ENCODE measurements at regions of chr11 and their contacts with region 1.

Region 1: DNA sequence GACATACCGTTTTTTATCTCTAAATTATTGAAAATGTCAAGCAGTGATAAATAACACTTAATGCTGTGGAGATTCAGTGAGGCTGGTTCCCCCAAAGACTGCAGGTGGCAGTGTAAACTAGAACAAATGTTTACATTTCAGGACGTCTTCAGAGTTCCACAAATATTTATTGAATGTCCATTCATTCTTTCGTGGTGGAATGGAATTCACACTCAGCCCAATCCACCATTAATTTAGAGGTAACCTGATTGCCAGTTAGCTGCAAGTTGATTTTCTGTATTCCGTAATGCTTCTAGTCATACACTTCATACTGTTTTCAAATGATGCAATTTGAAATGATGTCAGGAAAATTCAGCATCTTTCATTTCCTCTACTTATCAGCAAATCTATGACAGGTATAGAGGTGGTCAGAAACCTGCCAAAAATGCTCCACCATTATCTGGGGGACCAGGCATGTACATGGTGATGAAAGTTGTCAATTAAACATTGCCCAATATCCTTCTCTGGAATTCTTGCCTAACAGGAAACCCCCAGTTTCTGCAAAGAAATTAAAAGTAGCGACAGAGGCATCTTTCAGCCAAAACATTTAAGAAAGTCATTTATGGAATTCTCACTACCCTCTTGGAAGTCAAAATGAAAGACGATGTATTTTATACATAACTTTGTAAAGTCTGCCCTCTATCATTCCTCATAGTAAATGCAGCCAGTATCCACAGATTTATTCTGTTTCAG is 94.3 kb upstream of the BMAL1 start:
- DNase-seq: peak in 4 of 9 donors; percentile 3 to 15 (median 12)
- ATAC-seq: peak; percentile 62
- H3K4me3 ChIP-seq: no peak overlapping the region
- H3K4me3 Mint-ChIP-seq: peak overlapping the region in 8 of 10 donors; percentile 10 to 58 (median 36)
- H3K27ac ChIP-seq: no peak overlapping the region
- H3K27ac Mint-ChIP-seq: no peak overlapping the region
- H3K4me1 ChIP-seq: no peaks in the 10 kb centered on the region
- H3K4me1 Mint-ChIP-seq: peaks cover 0 to 9% (median 6%) of the 10 kb centered on the region in 7 donors
- H3K27me3 ChIP-seq: no peaks in the 10 kb centered on the region
- H3K27me3 Mint-ChIP-seq: peaks cover 5 to 16% (median 9%) of the 10 kb centered on the region in 5 donors

Region 2: GRCh38 chr11:12963792-12964536 is 219.3 kb before region 1 on chr11:
- CTCF ChIA-PET with region 1: no interaction called
- POLR2A ChIA-PET with region 1: no interaction called
- intact Hi-C with region 1: loop called in 1 of 2 experiments (anchors 1 kb)
- DNase-seq: peak; percentile 13 to 59 (median 39)
- ATAC-seq: peak; percentile 76
- H3K4me3 ChIP-seq: no peak overlapping the region
- H3K4me3 Mint-ChIP-seq: peak overlapping the region in 1 of 10 donors; percentile 5
- H3K27ac ChIP-seq: no peak overlapping the region
- H3K27ac Mint-ChIP-seq: no peak overlapping the region
- H3K4me1 ChIP-seq: no peaks in the 10 kb centered on the region
- H3K4me1 Mint-ChIP-seq: no peaks in the 10 kb centered on the region
- H3K27me3 ChIP-seq: no peaks in the 10 kb centered on the region
- H3K27me3 Mint-ChIP-seq: peaks cover 17 to 37% (median 30%) of the 10 kb centered on the region in 5 donors

Region 3: DNA sequence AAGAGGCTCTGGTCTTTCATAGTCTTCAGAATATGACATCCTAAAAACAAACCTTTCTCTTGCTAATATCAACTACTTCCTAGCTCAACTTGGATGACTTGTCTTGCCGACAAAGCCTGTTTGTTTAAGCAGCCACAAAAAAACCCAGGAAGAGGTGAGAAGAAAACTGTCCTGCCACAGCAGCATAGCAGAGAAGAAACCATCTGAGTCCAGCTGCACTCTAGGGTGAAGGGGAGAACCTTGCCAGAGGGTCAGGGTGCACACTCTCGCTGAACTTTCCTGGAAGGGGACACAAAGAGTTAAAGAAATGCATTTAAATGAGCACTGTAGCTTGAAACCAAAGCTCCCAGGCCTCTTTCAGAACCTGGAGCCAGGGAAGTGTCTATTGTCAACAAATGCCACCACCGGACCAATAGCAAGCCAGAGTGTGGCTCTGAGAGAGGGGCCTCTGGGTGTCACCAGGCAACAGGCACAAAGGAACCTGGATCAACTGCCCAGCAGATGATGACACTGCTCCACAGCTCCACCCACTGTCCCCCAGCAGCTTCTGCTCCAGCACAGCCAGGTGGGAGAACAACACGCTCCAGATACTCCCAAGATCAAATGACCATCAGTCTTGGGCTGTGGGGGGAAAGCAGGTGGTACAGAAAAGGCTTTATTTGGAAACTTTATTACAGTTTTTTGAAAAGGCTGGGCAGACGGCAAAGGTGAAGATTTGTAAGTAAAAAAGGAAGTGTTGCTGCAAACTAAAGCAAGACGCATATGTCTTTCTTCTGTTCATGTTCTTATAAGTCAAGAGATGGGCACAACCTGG is 68.5 kb before region 1 on chr11:
- CTCF ChIA-PET with region 1: no interaction called
- POLR2A ChIA-PET with region 1: no interaction called
- intact Hi-C with region 1: no loop called
- DNase-seq: no peak
- ATAC-seq: no peak
- H3K4me3 ChIP-seq: no peak overlapping the region
- H3K4me3 Mint-ChIP-seq: no peak overlapping the region
- H3K27ac ChIP-seq: no peak overlapping the region
- H3K27ac Mint-ChIP-seq: no peak overlapping the region
- H3K4me1 ChIP-seq: no peaks in the 10 kb centered on the region
- H3K4me1 Mint-ChIP-seq: peaks cover 0 to 7% (median 0%) of the 10 kb centered on the region in 7 donors
- H3K27me3 ChIP-seq: no peaks in the 10 kb centered on the region
- H3K27me3 Mint-ChIP-seq: peaks cover 16 to 49% (median 17%) of the 10 kb centered on the region in 5 donors

Region 4: GRCh38 chr11:13140028-13140870 is 43.0 kb before region 1 on chr11:
- CTCF ChIA-PET with region 1: no interaction called
- POLR2A ChIA-PET with region 1: no interaction called
- intact Hi-C with region 1: no loop called
- DNase-seq: no peak
- ATAC-seq: no peak
- H3K4me3 ChIP-seq: no peak overlapping the region
- H3K4me3 Mint-ChIP-seq: no peak overlapping the region
- H3K27ac ChIP-seq: no peak overlapping the region
- H3K27ac Mint-ChIP-seq: no peak overlapping the region
- H3K4me1 ChIP-seq: no peaks in the 10 kb centered on the region
- H3K4me1 Mint-ChIP-seq: peaks cover 0 to 2% (median 0%) of the 10 kb centered on the region in 7 donors
- H3K27me3 ChIP-seq: no peaks in the 10 kb centered on the region
- H3K27me3 Mint-ChIP-seq: peaks cover 9 to 43% (median 33%) of the 10 kb centered on the region in 5 donors

Region 5: GRCh38 chr11:13210424-13210823 is 27.2 kb after region 1 on chr11:
- CTCF ChIA-PET with region 1: interaction called, 8 read pairs
- POLR2A ChIA-PET with region 1: interaction called, 3 read pairs
- intact Hi-C with region 1: loop called in 1 of 2 experiments (anchors 1 kb)
- DNase-seq: peak in 3 of 9 donors; percentile 7 to 9 (median 8)
- ATAC-seq: no peak
- H3K4me3 ChIP-seq: no peak overlapping the region
- H3K4me3 Mint-ChIP-seq: no peak overlapping the region
- H3K27ac ChIP-seq: no peak overlapping the region
- H3K27ac Mint-ChIP-seq: peak overlapping the region in 1 of 9 donors; percentile 32
- H3K4me1 ChIP-seq: peaks cover 0 to 6% of the 10 kb centered on the region in 2 donors
- H3K4me1 Mint-ChIP-seq: peaks cover 16 to 33% (median 23%) of the 10 kb centered on the region in 7 donors
- H3K27me3 ChIP-seq: no peaks in the 10 kb centered on the region
- H3K27me3 Mint-ChIP-seq: peaks cover 0 to 3% (median 0%) of the 10 kb centered on the region in 5 donors

Region 6: DNA sequence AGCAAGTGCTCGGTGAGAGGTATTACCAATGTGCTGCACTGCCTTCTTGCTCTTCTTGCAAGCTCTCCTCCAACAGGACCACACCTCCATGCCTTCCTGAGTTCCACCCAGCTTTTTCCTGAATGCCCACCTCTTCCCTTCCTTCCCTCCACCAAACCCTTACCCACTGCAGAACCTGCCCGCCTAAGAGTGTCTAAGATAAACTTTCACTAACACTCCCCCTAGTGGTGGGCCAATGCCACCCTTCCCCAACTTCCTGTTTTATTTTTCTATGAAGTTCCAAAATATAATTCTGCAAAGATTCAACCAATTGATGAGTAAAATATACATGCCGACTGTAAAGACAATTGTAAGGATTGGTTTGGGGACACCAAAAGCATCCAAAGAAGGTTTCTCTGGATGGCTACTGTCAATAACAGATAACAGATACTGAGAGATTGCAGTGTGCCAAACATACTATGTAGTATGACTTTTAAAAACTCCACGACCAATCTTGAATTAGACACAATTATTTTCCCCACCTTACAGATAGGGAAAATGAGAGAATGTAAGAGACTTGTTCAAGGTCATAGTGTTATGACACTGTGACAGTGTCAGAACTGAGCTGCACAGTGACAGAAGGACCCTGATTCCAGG is 55.7 kb after region 1 on chr11:
- CTCF ChIA-PET with region 1: interaction called, 3 read pairs
- POLR2A ChIA-PET with region 1: no interaction called
- intact Hi-C with region 1: loop called (anchors 1 kb)
- DNase-seq: peak; percentile 11 to 59 (median 43)
- ATAC-seq: peak; percentile 84
- H3K4me3 ChIP-seq: no peak overlapping the region
- H3K4me3 Mint-ChIP-seq: no peak overlapping the region
- H3K27ac ChIP-seq: no peak overlapping the region
- H3K27ac Mint-ChIP-seq: no peak overlapping the region
- H3K4me1 ChIP-seq: no peaks in the 10 kb centered on the region
- H3K4me1 Mint-ChIP-seq: peaks cover 0 to 5% (median 0%) of the 10 kb centered on the region in 7 donors
- H3K27me3 ChIP-seq: no peaks in the 10 kb centered on the region
- H3K27me3 Mint-ChIP-seq: peaks cover 0 to 45% (median 15%) of the 10 kb centered on the region in 5 donors

Region 7: DNA sequence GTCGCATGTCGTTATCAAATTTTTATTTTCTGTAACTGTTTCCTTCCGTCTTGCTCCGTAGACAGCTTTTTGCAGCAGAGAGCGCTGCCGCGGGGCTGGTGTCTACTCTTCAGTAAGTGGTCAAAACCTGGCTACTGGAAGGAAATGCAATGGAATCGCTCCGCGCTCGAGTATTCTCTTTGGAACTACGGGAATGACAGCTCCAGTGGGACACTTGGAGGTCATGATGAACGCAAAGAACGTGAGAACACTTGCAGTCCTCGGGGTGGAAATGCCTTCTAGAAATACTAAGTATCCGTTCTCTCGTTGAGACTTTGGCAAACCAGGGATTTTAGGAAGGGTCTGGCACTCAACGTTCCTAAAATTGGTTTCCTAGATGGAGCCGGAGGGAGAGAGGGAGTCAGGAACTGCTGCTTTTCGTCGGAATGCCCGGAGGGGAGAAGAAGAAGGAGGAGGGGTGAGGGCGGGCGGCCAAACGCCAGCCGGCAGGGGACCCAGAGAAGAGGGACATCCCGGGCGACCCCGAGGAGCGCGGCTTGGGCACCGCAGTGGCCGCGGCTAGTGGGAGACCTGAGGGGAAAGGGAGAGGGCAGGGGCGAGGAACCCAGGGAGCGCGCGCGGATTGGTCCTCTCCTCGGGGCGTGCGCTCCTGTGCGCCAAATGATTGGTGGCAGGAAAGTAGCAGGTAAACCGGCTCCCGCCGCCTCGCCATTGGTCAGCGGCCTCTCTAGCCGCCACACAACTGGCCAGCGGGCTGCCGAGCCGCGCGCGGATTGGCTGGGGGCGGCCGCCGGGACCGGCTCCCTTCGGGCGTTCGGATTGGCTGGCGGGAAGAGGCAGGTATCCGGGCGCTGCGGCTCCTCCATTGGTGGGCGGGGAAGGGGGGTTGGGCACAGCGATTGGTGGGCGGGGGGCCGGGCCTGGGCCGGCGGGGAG is 93.8 kb after region 1 on chr11:
- CTCF ChIA-PET with region 1: no interaction called
- POLR2A ChIA-PET with region 1: interaction called, 6 read pairs
- intact Hi-C with region 1: loop called in 1 of 2 experiments (anchors 1 kb)
- DNase-seq: peak; percentile 93 to 97 (median 96)
- ATAC-seq: peak; percentile 91
- H3K4me3 ChIP-seq: peak overlapping the region; percentile 80
- H3K4me3 Mint-ChIP-seq: peak overlapping the region; percentile 95 to 99 (median 97)
- H3K27ac ChIP-seq: peak overlapping the region; percentile 81
- H3K27ac Mint-ChIP-seq: peak overlapping the region; percentile 72 to 97 (median 91)
- H3K4me1 ChIP-seq: peaks cover 19 to 29% of the 10 kb centered on the region in 2 donors
- H3K4me1 Mint-ChIP-seq: peaks cover 32 to 47% (median 40%) of the 10 kb centered on the region in 7 donors
- H3K27me3 ChIP-seq: no peaks in the 10 kb centered on the region
- H3K27me3 Mint-ChIP-seq: peaks cover 0 to 51% (median 0%) of the 10 kb centered on the region in 5 donors

Region 8: GRCh38 chr11:13343931-13344717 is 160.9 kb after region 1 on chr11:
- CTCF ChIA-PET with region 1: interaction called, 8 read pairs
- POLR2A ChIA-PET with region 1: no interaction called
- intact Hi-C with region 1: loop called (anchors 1 kb)
- DNase-seq: peak; percentile 42 to 68 (median 62)
- ATAC-seq: peak; percentile 79
- H3K4me3 ChIP-seq: no peak overlapping the region
- H3K4me3 Mint-ChIP-seq: no peak overlapping the region
- H3K27ac ChIP-seq: no peak overlapping the region
- H3K27ac Mint-ChIP-seq: peak overlapping the region in 6 of 9 donors; percentile 2 to 25 (median 10)
- H3K4me1 ChIP-seq: peaks cover 12 to 15% of the 10 kb centered on the region in 2 donors
- H3K4me1 Mint-ChIP-seq: peaks cover 41 to 82% (median 65%) of the 10 kb centered on the region in 7 donors
- H3K27me3 ChIP-seq: no peaks in the 10 kb centered on the region
- H3K27me3 Mint-ChIP-seq: no peaks in the 10 kb centered on the region

Region 9: GRCh38 chr11:13384908-13385640 is 201.8 kb after region 1 on chr11:
- CTCF ChIA-PET with region 1: no interaction called
- POLR2A ChIA-PET with region 1: no interaction called
- intact Hi-C with region 1: loop called (anchors 1 kb)
- DNase-seq: peak in 5 of 9 donors; percentile 5 to 22 (median 10)
- ATAC-seq: peak; percentile 46
- H3K4me3 ChIP-seq: no peak overlapping the region
- H3K4me3 Mint-ChIP-seq: no peak overlapping the region
- H3K27ac ChIP-seq: no peak overlapping the region
- H3K27ac Mint-ChIP-seq: peak overlapping the region in 8 of 9 donors; percentile 3 to 80 (median 46)
- H3K4me1 ChIP-seq: no peaks in the 10 kb centered on the region
- H3K4me1 Mint-ChIP-seq: peaks cover 0 to 8% (median 0%) of the 10 kb centered on the region in 7 donors
- H3K27me3 ChIP-seq: no peaks in the 10 kb centered on the region
- H3K27me3 Mint-ChIP-seq: no peaks in the 10 kb centered on the region

Region 10: GRCh38 chr11:13668102-13668956 is 485.1 kb after region 1 on chr11 and contains the start of gene FAR1:
- CTCF ChIA-PET with region 1: no interaction called
- POLR2A ChIA-PET with region 1: no interaction called
- intact Hi-C with region 1: no loop called
- DNase-seq: peak; percentile 89 to 97 (median 96)
- ATAC-seq: peak; percentile 94
- H3K4me3 ChIP-seq: peak within 1 kb of the TSS; percentile 90
- H3K4me3 Mint-ChIP-seq: peak within 1 kb of the TSS; percentile 90 to 100 (median 97)
- H3K27ac ChIP-seq: peak within 1 kb of the TSS; percentile 69
- H3K27ac Mint-ChIP-seq: peak within 1 kb of the TSS; percentile 69 to 99 (median 93)
- H3K4me1 ChIP-seq: peaks cover 14 to 17% of the 10 kb centered on the region in 2 donors
- H3K4me1 Mint-ChIP-seq: peaks cover 37 to 48% (median 45%) of the 10 kb centered on the region in 7 donors
- H3K27me3 ChIP-seq: no peaks in the 10 kb centered on the region
- H3K27me3 Mint-ChIP-seq: peaks cover 0 to 21% (median 7%) of the 10 kb centered on the region in 5 donors
- total RNA-seq, gene FAR1: 31.4 to 53.7 (median 33.8) TPM

Measured in naive thymus-derived CD4-positive, alpha-beta T cell (primary cell).